HCT116 (cell line): ENCODE measurements at regions of chr6 and their contacts with region 1.

Region 1: GRCh38 chr6:13328076-13328874 is at the start of gene TBC1D7:
- DNase-seq: peak; percentile 73
- ATAC-seq: peak; percentile 91
- H3K4me3 ChIP-seq: peak within 1 kb of the TSS; percentile 84 to 91
- H3K27ac ChIP-seq: peak within 1 kb of the TSS; percentile 82
- H3K4me1 ChIP-seq: peaks cover 6 to 24% of the 10 kb centered on the region in 2 experiments
- H3K27me3 ChIP-seq: no peaks in the 10 kb centered on the region
- CTCF ChIP-seq: peak in 2 of 3 experiments; percentile 12; a peak in 1 of 6 replicates
- POLR2A ChIP-seq: peak; percentile 56
- RAD21 ChIP-seq: no peak
- total RNA-seq, gene TBC1D7: 13.7 TPM

Region 2: DNA sequence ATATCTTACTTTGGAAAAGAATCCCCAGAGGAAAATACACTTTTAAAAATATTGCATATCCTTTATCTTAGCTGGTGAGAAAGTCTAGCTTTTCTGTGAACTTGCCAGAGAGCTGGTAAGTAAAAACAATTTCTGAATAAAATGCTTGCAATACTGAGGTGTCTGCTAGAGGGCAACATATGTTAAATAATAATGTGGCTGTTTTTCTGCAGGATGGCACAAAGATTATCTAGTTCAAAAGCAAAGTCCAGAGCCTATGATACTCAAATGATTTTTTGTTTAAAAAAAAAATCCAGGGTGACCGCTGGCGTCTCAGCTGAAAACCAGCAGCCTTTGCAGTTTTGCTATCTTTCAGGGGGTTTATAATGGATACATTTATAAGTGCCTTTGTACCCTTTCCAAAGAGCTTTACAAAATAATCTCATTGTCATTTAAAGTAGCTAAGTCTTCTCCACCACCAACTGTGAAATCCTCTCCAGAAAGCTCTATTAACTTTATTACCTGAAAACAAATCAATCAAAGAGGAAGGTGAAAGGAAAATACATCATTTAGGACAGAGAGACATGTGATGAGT is 416.8 kb before region 1 on chr6:
- CTCF ChIA-PET with region 1: interaction called, 5 read pairs
- POLR2A ChIA-PET with region 1: no interaction called
- RAD21 ChIA-PET with region 1: no interaction called
- intact Hi-C with region 1: loop called (anchors 1 kb)
- DNase-seq: no peak
- ATAC-seq: no peak
- H3K4me3 ChIP-seq: no peak overlapping the region
- H3K27ac ChIP-seq: no peak overlapping the region
- H3K4me1 ChIP-seq: no peaks in the 10 kb centered on the region
- H3K27me3 ChIP-seq: peaks cover 46% of the 10 kb centered on the region
- CTCF ChIP-seq: peak in 2 of 3 experiments; percentile 31 to 41; a peak in 3 of 6 replicates
- POLR2A ChIP-seq: no peak
- RAD21 ChIP-seq: peak; percentile 56

Region 3: GRCh38 chr6:13178107-13178506 is 150.2 kb before region 1 on chr6:
- CTCF ChIA-PET with region 1: no interaction called
- POLR2A ChIA-PET with region 1: no interaction called
- RAD21 ChIA-PET with region 1: no interaction called
- intact Hi-C with region 1: no loop called
- DNase-seq: no peak
- ATAC-seq: no peak
- H3K4me3 ChIP-seq: no peak overlapping the region
- H3K27ac ChIP-seq: no peak overlapping the region
- H3K4me1 ChIP-seq: no peaks in the 10 kb centered on the region
- H3K27me3 ChIP-seq: peaks cover 39% of the 10 kb centered on the region
- CTCF ChIP-seq: no peak
- POLR2A ChIP-seq: no peak
- RAD21 ChIP-seq: no peak

Region 4: DNA sequence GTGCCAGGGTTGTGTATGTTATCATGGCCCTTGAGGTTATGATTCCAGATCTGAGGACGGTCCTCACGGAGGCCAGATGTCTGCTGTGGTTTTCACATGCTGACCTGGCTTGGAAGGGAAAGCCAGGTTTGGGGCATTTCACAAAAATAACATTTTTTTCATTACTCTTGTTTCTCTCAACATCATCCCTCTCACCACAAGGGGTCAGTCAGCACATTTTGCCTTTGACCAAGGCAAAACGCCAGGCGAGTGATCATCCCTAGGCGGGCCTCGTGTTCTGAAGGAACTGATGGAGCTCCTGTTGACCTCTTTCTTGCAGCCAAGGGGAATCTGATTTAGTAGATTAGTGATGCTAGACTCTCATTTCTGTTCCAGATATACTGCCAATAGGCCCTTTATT is 133.4 kb before region 1 on chr6:
- CTCF ChIA-PET with region 1: interaction called, 4 read pairs
- POLR2A ChIA-PET with region 1: no interaction called
- RAD21 ChIA-PET with region 1: no interaction called
- intact Hi-C with region 1: loop called (anchors 2 kb)
- DNase-seq: peak; percentile 21
- ATAC-seq: peak; percentile 82
- H3K4me3 ChIP-seq: no peak overlapping the region
- H3K27ac ChIP-seq: no peak overlapping the region
- H3K4me1 ChIP-seq: no peaks in the 10 kb centered on the region
- H3K27me3 ChIP-seq: peaks cover 28% of the 10 kb centered on the region
- CTCF ChIP-seq: peak; percentile 30 to 61 (median 56); a peak in 5 of 6 replicates
- POLR2A ChIP-seq: no peak
- RAD21 ChIP-seq: peak; percentile 60